ENCODE measurements at regions of chr3 and their contacts with region 1.

Region 1: DNA sequence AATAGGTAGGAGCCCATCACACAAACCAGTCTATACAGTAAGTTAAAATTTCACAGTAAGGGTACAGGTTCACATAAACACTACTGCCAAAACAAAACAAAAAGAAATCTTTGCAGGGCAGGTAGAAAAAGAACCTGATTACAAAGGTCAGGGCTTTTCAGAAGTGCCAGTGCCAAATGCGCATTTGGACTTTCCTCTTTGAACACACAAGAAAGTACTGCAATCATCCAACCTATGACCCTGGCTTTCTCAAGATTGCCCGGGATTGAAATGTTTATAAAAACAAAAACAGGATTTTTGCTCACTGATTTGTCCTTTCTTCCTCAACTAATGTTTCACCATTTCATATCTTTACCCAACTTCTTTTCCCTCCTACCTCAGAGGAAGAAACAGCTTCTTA is 47.4 kb downstream of the CBLB start:
- DNase-seq: peak in 1 of 2 experiments; percentile 8
- H3K4me3 ChIP-seq: no peak overlapping the region
- H3K4me3 Mint-ChIP-seq: no peak overlapping the region
- H3K27ac Mint-ChIP-seq: no peak overlapping the region
- H3K4me1 ChIP-seq: peaks cover 41% of the 10 kb centered on the region
- H3K4me1 Mint-ChIP-seq: peaks cover 42% of the 10 kb centered on the region
- H3K27me3 ChIP-seq: no peaks in the 10 kb centered on the region
- H3K27me3 Mint-ChIP-seq: no peaks in the 10 kb centered on the region
- CTCF ChIP-seq: no peak

Region 2: DNA sequence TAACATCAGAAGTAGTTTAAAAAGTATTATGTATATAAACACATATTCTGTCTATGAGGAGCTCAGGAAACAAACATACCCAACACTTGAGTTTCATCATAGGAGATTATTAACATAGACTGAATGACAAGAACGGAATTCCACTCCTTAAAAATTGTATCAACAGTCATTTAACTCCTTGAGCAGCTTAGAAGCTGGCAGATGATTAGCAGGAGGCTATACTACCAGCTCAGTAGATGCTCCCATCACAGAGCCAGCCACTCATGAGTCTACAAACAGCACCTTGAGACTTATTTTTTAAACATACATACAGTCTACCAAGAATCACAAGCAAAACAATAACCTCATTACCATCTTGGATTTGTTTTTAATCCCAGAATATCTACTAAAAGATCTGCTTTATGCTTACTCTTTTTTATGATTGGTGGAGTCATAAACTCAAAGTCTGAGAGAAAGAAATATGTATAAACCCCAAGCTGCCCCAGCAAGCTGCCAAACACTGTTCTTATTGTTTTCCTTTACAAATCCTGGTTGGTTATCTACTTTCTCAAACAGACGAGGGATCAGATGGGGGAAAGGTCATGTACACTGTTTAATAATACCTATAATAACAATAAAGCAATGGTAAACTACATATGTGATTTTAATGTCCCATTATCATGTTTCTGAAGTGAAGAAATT is 12.1 kb before region 1 on chr3:
- CTCF ChIA-PET with region 1: no interaction called
- POLR2A ChIA-PET with region 1: no interaction called
- intact Hi-C with region 1: loop called (anchors 1 kb)
- DNase-seq: peak in 1 of 2 experiments; percentile 22
- H3K4me3 ChIP-seq: no peak overlapping the region
- H3K4me3 Mint-ChIP-seq: no peak overlapping the region
- H3K27ac Mint-ChIP-seq: no peak overlapping the region
- H3K4me1 ChIP-seq: peaks cover 8% of the 10 kb centered on the region
- H3K4me1 Mint-ChIP-seq: peaks cover 17% of the 10 kb centered on the region
- H3K27me3 ChIP-seq: no peaks in the 10 kb centered on the region
- H3K27me3 Mint-ChIP-seq: no peaks in the 10 kb centered on the region
- CTCF ChIP-seq: no peak

Measured in Caco-2 (cell line).